Pancreas (tissue), 10 donors: ENCODE measurements at regions of chr3 and their contacts with region 1.

Region 1: DNA sequence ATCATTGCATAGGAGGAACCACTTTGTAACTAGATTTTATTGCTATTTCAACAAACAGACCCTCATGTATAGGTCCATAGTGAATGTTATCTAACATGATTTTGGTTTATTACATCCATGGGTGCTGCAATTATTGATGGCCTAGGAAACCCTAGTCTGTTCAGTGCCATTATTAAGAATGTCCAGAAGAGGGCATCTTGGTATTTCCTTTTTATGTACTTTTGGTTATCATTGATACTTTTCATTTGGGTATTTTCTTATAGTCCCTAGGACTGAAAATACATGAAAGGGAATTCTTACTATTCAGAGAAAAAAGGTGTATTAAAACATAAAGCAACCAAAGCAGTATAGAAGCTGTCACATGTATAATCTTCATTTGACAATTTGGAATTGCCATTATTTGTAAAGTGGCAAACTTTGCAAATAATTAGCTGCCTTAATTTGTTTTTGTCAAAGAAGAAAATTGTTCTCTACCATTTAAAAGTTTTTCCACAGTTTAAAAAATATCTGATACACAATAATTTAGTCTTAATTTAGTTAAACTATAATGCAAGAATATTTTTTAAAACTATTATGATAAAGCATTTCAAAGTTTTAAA is 48.7 kb downstream of the CNOT10 start:
- DNase-seq: no peak
- ATAC-seq: peak in 3 of 4 donors; percentile 45 to 53 (median 46)
- H3K4me3 ChIP-seq: no peak overlapping the region
- H3K27ac ChIP-seq: no peak overlapping the region
- H3K4me1 ChIP-seq: no peaks in the 10 kb centered on the region
- H3K27me3 ChIP-seq: no peaks in the 10 kb centered on the region
- CTCF ChIP-seq: peak in 3 of 4 donors; percentile 19 to 34 (median 27)

Region 2: DNA sequence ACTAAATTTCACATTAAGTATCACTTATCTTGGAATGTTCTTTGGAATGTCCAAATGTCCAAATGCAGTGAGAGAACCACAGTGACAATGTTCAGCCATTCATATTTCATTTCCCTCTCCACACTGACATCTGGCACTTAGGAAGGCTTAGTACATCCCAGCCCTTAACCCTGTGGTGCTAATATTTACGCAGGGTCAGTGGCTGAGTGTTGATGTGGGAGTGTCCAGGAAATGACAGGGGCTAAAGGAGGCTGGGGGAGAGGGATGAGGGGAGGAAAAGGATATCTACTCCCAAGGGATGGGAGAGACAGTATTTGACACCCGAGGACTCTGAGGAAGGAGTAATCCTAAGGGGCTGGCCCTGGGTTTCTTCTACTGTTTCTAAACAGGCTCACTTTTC is 203.6 kb after region 1 on chr3:
- intact Hi-C with region 1: loop called in 1 of 3 experiments (anchors 5 kb)
- DNase-seq: no peak
- ATAC-seq: no peak
- H3K4me3 ChIP-seq: no peak overlapping the region
- H3K27ac ChIP-seq: no peak overlapping the region
- H3K4me1 ChIP-seq: no peaks in the 10 kb centered on the region
- H3K27me3 ChIP-seq: no peaks in the 10 kb centered on the region
- CTCF ChIP-seq: no peak